Activated CD4-positive, alpha-beta T cell treated with anti-CD3 and anti-CD28 coated beads, Interleukin-2, amount 10 ng/mL, durations not matched to agents 24 days and 14 days (primary cell): ENCODE measurements at regions of chr11 and their contacts with region 1.

Region 1: GRCh38 chr11:32960553-32961164 is 55.0 kb upstream of the DEPDC7 start:
- DNase-seq: no peak
- H3K4me3 Mint-ChIP-seq: no peak overlapping the region
- H3K27ac Mint-ChIP-seq: no peak overlapping the region
- H3K4me1 Mint-ChIP-seq: peaks cover 9% of the 10 kb centered on the region
- H3K27me3 Mint-ChIP-seq: no peaks in the 10 kb centered on the region

Region 2: GRCh38 chr11:32751381-32751780 is 209.3 kb before region 1 on chr11:
- intact Hi-C with region 1: no loop called
- DNase-seq: no peak
- H3K4me3 Mint-ChIP-seq: no peak overlapping the region
- H3K27ac Mint-ChIP-seq: no peak overlapping the region
- H3K4me1 Mint-ChIP-seq: no peaks in the 10 kb centered on the region
- H3K27me3 Mint-ChIP-seq: peaks cover 5% of the 10 kb centered on the region

Region 3: GRCh38 chr11:32809313-32809712 is 151.3 kb before region 1 on chr11:
- intact Hi-C with region 1: loop called (anchors 5 kb)
- DNase-seq: peak; percentile 85
- H3K4me3 Mint-ChIP-seq: no peak overlapping the region
- H3K27ac Mint-ChIP-seq: no peak overlapping the region
- H3K4me1 Mint-ChIP-seq: no peaks in the 10 kb centered on the region
- H3K27me3 Mint-ChIP-seq: peaks cover 9% of the 10 kb centered on the region

Region 4: GRCh38 chr11:33015621-33016551 is 55.2 kb after region 1 on chr11 and contains the start of gene DEPDC7:
- intact Hi-C with region 1: loop called (anchors 2 kb)
- DNase-seq: peak; percentile 93
- H3K4me3 Mint-ChIP-seq: peak within 1 kb of the TSS; percentile 84
- H3K27ac Mint-ChIP-seq: no peak within 1 kb of the TSS
- H3K4me1 Mint-ChIP-seq: peaks cover 16% of the 10 kb centered on the region
- H3K27me3 Mint-ChIP-seq: peaks cover 61% of the 10 kb centered on the region
- total RNA-seq, gene DEPDC7: 0.64 and 0.84 TPM in 2 replicates

Region 5: GRCh38 chr11:33039274-33040032 is 78.8 kb after region 1 on chr11 and contains the start of gene TCP11L1:
- intact Hi-C with region 1: loop called (anchors 1 kb)
- DNase-seq: peak; percentile 94
- H3K4me3 Mint-ChIP-seq: peak within 1 kb of the TSS; percentile 93
- H3K27ac Mint-ChIP-seq: peak within 1 kb of the TSS; percentile 93
- H3K4me1 Mint-ChIP-seq: peaks cover 21% of the 10 kb centered on the region
- H3K27me3 Mint-ChIP-seq: peaks cover 12% of the 10 kb centered on the region
- total RNA-seq, gene TCP11L1: 12.5 and 14.4 TPM in 2 replicates

Region 6: DNA sequence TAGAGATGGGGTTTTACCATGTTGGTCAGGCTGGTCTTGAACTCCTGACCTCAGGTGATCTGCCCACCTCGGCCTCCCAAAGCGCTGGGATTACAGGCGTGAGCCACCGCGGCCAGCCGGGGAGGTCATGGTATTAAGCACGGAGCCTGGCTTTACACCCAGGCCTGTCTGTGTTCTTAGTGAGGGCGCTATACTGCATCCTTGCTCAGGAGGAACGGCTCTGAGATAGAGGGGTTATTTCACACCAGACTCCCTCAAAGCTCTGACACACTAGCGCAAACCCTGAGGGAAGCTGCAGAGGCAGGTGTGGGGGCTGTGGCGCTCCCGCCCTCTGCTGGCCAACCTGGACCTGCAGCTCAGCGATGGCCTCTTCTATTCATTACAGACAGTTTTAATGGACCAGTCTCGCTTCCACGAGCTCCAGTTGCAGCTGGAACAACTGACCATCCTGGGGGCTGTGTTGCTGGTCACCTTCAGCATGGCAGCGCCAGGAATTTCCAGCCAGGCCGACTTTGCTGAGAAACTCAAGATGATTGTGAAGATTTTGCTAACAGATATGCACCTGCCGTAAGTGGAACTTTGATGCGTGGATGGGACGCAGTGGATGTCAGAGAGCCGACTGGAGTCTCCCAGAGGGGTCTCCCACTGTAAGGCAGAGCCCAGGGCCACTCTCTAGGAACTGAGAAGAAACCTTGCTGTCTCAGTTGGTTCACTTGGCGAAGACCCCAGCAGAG is 105.0 kb after region 1 on chr11:
- intact Hi-C with region 1: loop called (anchors 1 kb)
- DNase-seq: peak; percentile 91
- H3K4me3 Mint-ChIP-seq: no peak overlapping the region
- H3K27ac Mint-ChIP-seq: no peak overlapping the region
- H3K4me1 Mint-ChIP-seq: peaks cover 32% of the 10 kb centered on the region
- H3K27me3 Mint-ChIP-seq: no peaks in the 10 kb centered on the region

Region 7: GRCh38 chr11:33329705-33330329 is 369.2 kb after region 1 on chr11:
- intact Hi-C with region 1: loop called (anchors 5 kb)
- DNase-seq: peak; percentile 80
- H3K4me3 Mint-ChIP-seq: no peak overlapping the region
- H3K27ac Mint-ChIP-seq: no peak overlapping the region
- H3K4me1 Mint-ChIP-seq: peaks cover 4% of the 10 kb centered on the region
- H3K27me3 Mint-ChIP-seq: no peaks in the 10 kb centered on the region